Activated naive CD4-positive, alpha-beta T cell treated with anti-CD3 and anti-CD28 coated beads, Interleukin-2, amount 10 ng/mL, durations not matched to agents 7 days and 5 days (primary cell): ENCODE measurements at regions of chr4 and their contacts with region 1.

Region 1: GRCh38 chr4:56799824-56800756 is 21.4 kb downstream of the SPINK2 start:
- DNase-seq: peak; percentile 91
- H3K4me3 Mint-ChIP-seq: peak overlapping the region; percentile 82
- H3K27ac Mint-ChIP-seq: peak overlapping the region; percentile 55
- H3K4me1 Mint-ChIP-seq: peaks cover 28% of the 10 kb centered on the region
- H3K27me3 Mint-ChIP-seq: peaks cover 21% of the 10 kb centered on the region

Region 2: DNA sequence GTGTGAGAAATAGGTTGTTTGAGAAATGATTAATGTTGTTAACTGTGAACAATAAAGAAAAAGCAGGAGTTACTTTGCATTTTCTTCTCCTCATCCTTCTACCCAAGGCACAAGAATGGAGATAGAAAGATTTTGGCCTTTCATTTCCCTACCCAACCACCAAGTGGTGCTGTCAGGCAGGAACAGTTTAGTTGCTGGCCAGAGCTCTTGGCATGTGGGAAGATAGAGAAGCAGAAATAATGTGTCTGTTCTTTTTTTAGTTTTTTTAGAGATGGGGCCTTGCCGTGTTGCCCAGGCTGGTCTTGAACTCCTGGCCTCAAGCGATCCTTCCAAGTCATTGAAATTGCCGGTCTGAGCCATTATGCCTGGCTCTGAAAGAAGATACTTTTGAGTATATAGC is 131.8 kb before region 1 on chr4:
- CTCF ChIA-PET with region 1: interaction called, 20 read pairs
- DNase-seq: peak; percentile 37
- H3K4me3 Mint-ChIP-seq: no peak overlapping the region
- H3K27ac Mint-ChIP-seq: no peak overlapping the region
- H3K4me1 Mint-ChIP-seq: no peaks in the 10 kb centered on the region
- H3K27me3 Mint-ChIP-seq: peaks cover 35% of the 10 kb centered on the region

Region 3: DNA sequence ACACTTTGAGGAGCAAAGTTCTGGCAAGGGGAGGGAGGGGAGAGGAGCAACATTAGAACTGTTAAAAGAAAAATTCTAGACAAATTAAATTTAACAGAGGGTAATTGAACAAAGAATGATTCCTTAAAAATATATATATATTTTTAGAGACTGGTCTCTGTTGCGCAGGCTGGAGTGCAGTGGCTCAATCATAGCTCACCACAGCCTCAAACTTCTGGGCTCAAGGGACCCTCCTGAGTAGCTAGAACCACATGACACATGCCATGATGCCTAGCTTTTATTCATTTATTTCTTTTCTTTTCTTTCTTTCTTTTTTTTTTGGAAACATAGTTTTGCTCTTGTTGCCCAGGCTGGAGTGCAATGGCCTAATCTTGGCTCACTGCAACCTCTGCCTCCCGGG is 40.5 kb after region 1 on chr4:
- CTCF ChIA-PET with region 1: interaction called, 20 read pairs
- DNase-seq: no peak
- H3K4me3 Mint-ChIP-seq: no peak overlapping the region
- H3K27ac Mint-ChIP-seq: no peak overlapping the region
- H3K4me1 Mint-ChIP-seq: peaks cover 5% of the 10 kb centered on the region
- H3K27me3 Mint-ChIP-seq: no peaks in the 10 kb centered on the region

Region 4: GRCh38 chr4:57037982-57038604 is 238.0 kb after region 1 on chr4:
- CTCF ChIA-PET with region 1: no interaction called
- DNase-seq: no peak
- H3K4me3 Mint-ChIP-seq: no peak overlapping the region
- H3K27ac Mint-ChIP-seq: no peak overlapping the region
- H3K4me1 Mint-ChIP-seq: no peaks in the 10 kb centered on the region
- H3K27me3 Mint-ChIP-seq: peaks cover 22% of the 10 kb centered on the region